Psoas muscle (tissue), 8 donors: ENCODE measurements at regions of chr6 and their contacts with region 1.

Region 1: GRCh38 chr6:10510592-10511367 is 10.4 kb upstream of the GCNT2 start:
- DNase-seq: peak; percentile 38 to 70
- ATAC-seq: peak; percentile 84 to 91 (median 88)
- H3K4me3 ChIP-seq: peak overlapping the region; percentile 19
- H3K27ac ChIP-seq: peak overlapping the region; percentile 76
- H3K4me1 ChIP-seq: no peaks in the 10 kb centered on the region
- H3K27me3 ChIP-seq: no peaks in the 10 kb centered on the region
- CTCF ChIP-seq: peak; percentile 53

Region 2: GRCh38 chr6:10528170-10528981 is 17.6 kb after region 1 on chr6:
- intact Hi-C with region 1: no loop called
- DNase-seq: no peak
- ATAC-seq: peak in 3 of 4 donors; percentile 34 to 53 (median 38)
- H3K4me3 ChIP-seq: peak overlapping the region; percentile 53
- H3K27ac ChIP-seq: peak overlapping the region; percentile 61
- H3K4me1 ChIP-seq: no peaks in the 10 kb centered on the region
- H3K27me3 ChIP-seq: no peaks in the 10 kb centered on the region
- CTCF ChIP-seq: no peak

Region 3: GRCh38 chr6:10694302-10695085 is 183.7 kb after region 1 on chr6 and contains the starts of genes C6orf52 and PAK1IP1:
- intact Hi-C with region 1: loop called in 1 of 2 experiments (anchors 2 kb)
- DNase-seq: peak; percentile 92 to 96
- ATAC-seq: peak; percentile 98 to 99 (median 99)
- H3K4me3 ChIP-seq: peak within 1 kb of the TSS; percentile 89
- H3K27ac ChIP-seq: peak within 1 kb of the TSS; percentile 88
- H3K4me1 ChIP-seq: peaks cover 27% of the 10 kb centered on the region
- H3K27me3 ChIP-seq: no peaks in the 10 kb centered on the region
- CTCF ChIP-seq: no peak
- total RNA-seq, gene C6orf52: 0.61 to 1.5 (median 1.0) TPM
- total RNA-seq, gene PAK1IP1: 9.5 to 22.6 (median 18.3) TPM